Activated naive CD4-positive, alpha-beta T cell treated with anti-CD3 and anti-CD28 coated beads for 36 hours (primary cell): ENCODE measurements at regions of chr9 and their contacts with region 1.

Region 1: DNA sequence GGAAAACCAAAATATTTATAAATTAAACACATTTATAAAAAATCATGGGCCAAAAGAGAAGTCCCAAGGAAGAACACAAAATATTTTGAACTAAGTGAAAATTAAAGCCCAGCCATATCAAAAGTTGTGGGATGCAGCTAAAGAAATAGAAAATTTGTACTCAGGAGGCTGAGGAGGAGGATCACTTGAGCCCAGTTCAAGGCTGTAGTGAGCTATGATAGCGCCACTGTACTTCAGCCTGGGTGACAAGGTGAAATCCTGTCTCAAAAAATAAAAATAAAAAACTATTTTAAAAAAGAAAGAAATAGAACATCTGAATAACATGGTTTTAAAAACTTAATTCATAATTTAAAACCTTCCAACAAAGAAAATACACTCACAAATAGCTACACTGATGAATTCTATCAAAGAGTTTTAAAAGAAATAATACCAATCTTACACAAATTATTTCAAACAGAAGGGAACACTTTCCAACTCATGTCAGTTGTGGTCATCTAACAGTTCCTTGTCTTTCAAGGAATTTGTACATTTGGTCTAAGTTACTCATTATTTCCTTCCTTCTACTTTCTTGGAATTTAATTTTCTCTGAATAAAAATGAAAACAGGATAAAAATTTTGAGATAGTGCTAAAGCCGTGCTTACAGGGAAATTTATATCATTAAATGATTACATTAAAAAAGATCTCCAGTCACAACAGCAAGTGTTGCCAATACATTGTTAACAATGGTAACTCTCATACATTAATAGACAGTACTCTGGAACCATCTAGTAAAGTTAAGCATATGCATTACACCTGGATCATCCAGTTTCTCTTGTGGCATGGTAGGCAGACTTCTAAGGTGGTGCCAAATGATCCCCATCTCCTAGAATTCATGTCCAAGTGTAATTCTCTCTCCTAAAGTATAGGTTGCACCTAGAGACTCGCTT is 17.8 kb downstream of the PTBP3 start:
- DNase-seq: no peak
- H3K4me3 Mint-ChIP-seq: no peak overlapping the region
- H3K27ac Mint-ChIP-seq: no peak overlapping the region
- H3K4me1 Mint-ChIP-seq: peaks cover 68% of the 10 kb centered on the region
- H3K27me3 Mint-ChIP-seq: no peaks in the 10 kb centered on the region

Region 2: GRCh38 chr9:112174218-112174964 is 141.2 kb before region 1 on chr9:
- CTCF ChIA-PET with region 1: interaction called, 10 read pairs
- intact Hi-C with region 1: no loop called
- DNase-seq: peak; percentile 86
- H3K4me3 Mint-ChIP-seq: peak overlapping the region; percentile 82
- H3K27ac Mint-ChIP-seq: peak overlapping the region; percentile 79
- H3K4me1 Mint-ChIP-seq: peaks cover 30% of the 10 kb centered on the region
- H3K27me3 Mint-ChIP-seq: peaks cover 19% of the 10 kb centered on the region

Region 3: GRCh38 chr9:112249277-112249676 is 66.3 kb before region 1 on chr9:
- CTCF ChIA-PET with region 1: no interaction called
- intact Hi-C with region 1: no loop called
- DNase-seq: no peak
- H3K4me3 Mint-ChIP-seq: no peak overlapping the region
- H3K27ac Mint-ChIP-seq: no peak overlapping the region
- H3K4me1 Mint-ChIP-seq: peaks cover 23% of the 10 kb centered on the region
- H3K27me3 Mint-ChIP-seq: no peaks in the 10 kb centered on the region

Region 4: DNA sequence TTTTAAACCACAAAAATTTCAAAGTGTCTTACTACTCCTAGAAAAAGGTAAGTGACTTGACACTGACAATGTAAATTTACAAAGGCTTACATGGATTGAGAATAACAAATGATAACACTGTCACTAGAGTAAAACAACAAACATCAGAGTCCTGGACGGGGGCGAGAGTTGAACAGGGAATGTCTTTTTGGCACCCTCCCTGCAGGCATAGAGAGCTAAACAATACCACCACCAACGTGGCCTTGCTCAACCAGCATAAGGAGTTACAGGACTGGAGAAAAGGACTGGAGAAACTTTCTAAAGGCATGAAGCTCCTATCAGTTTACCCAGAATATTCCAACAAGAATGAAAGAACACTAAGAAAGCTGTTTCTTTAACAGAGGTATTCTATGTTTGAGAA is 37.4 kb before region 1 on chr9:
- CTCF ChIA-PET with region 1: no interaction called
- intact Hi-C with region 1: loop called (anchors 5 kb)
- DNase-seq: no peak
- H3K4me3 Mint-ChIP-seq: no peak overlapping the region
- H3K27ac Mint-ChIP-seq: no peak overlapping the region
- H3K4me1 Mint-ChIP-seq: peaks cover 52% of the 10 kb centered on the region
- H3K27me3 Mint-ChIP-seq: no peaks in the 10 kb centered on the region

Region 5: GRCh38 chr9:112327718-112328464 is 12.3 kb after region 1 on chr9:
- CTCF ChIA-PET with region 1: interaction called, 7 read pairs
- intact Hi-C with region 1: loop called (anchors 1 kb)
- DNase-seq: no peak
- H3K4me3 Mint-ChIP-seq: no peak overlapping the region
- H3K27ac Mint-ChIP-seq: peak overlapping the region; percentile 50
- H3K4me1 Mint-ChIP-seq: peaks cover 59% of the 10 kb centered on the region
- H3K27me3 Mint-ChIP-seq: no peaks in the 10 kb centered on the region